HCT116 (cell line): ENCODE measurements at regions of chr10 and their contacts with region 1.

Region 1: DNA sequence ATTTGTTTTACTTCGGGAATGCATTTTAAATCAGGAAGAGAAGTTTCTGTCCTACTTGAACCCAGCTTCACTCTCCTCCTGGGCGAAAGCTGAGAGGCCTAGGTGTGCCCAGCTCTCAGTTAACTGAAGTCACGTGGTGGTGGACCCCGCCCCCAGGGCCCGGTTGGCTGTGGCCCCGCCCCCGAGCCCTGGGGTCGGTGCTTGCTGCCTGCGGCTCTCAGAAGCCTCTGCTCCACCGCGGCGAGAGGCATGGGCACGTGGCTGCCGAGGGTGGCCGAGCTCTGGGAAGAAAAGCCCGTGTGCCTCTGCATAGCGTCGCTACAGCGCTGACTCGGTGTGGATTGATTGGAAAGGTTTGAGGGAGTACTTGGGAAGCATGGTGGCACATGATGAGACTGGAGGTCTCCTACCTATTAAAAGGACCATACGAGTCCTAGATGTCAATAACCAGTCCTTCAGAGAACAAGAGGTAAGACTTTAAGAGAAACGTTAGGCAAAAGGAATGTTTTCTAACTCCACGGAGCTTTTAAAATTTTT is 34.1 kb downstream of the NET1 start:
- DNase-seq: peak; percentile 52
- ATAC-seq: peak; percentile 99
- H3K4me3 ChIP-seq: peak overlapping the region; percentile 37 to 52
- H3K27ac ChIP-seq: peak overlapping the region; percentile 15; the same call in 1 of the 2 replicates
- H3K4me1 ChIP-seq: peaks cover 10 to 29% of the 10 kb centered on the region in 2 experiments
- H3K27me3 ChIP-seq: no peaks in the 10 kb centered on the region
- CTCF ChIP-seq: no peak
- POLR2A ChIP-seq: no peak
- RAD21 ChIP-seq: peak; percentile 30; the same call in 1 of the 2 replicates

Region 2: GRCh38 chr10:5548527-5549223 is 102.2 kb after region 1 on chr10:
- CTCF ChIA-PET with region 1: interaction called, 4 read pairs
- POLR2A ChIA-PET with region 1: interaction called, 3 read pairs
- RAD21 ChIA-PET with region 1: no interaction called
- intact Hi-C with region 1: loop called (anchors 5 kb)
- DNase-seq: peak; percentile 81
- ATAC-seq: peak; percentile 83
- H3K4me3 ChIP-seq: peak overlapping the region; percentile 29 to 44; a peak in 3 of 4 replicates
- H3K27ac ChIP-seq: peak overlapping the region; percentile 67
- H3K4me1 ChIP-seq: peaks cover 44 to 70% of the 10 kb centered on the region in 2 experiments
- H3K27me3 ChIP-seq: no peaks in the 10 kb centered on the region
- CTCF ChIP-seq: no peak
- POLR2A ChIP-seq: no peak
- RAD21 ChIP-seq: no peak

Region 3: GRCh38 chr10:5629303-5630111 is 183.0 kb after region 1 on chr10:
- CTCF ChIA-PET with region 1: interaction called, 10 read pairs
- POLR2A ChIA-PET with region 1: interaction called, 3 read pairs
- RAD21 ChIA-PET with region 1: no interaction called
- intact Hi-C with region 1: no loop called
- DNase-seq: peak; percentile 61
- ATAC-seq: peak; percentile 98
- H3K4me3 ChIP-seq: no peak overlapping the region
- H3K27ac ChIP-seq: no peak overlapping the region
- H3K4me1 ChIP-seq: peaks cover 7 to 15% of the 10 kb centered on the region in 2 experiments; a peak in 3 of 4 replicates
- H3K27me3 ChIP-seq: 0 out of 2 replicates have a peak, but pooled peaks cover 2% of the 10 kb centered on the region
- CTCF ChIP-seq: peak; percentile 76 to 91 (median 88)
- POLR2A ChIP-seq: no peak
- RAD21 ChIP-seq: peak; percentile 71